ENCODE measurements at regions of chr9 and their contacts with region 1.

Region 1: DNA sequence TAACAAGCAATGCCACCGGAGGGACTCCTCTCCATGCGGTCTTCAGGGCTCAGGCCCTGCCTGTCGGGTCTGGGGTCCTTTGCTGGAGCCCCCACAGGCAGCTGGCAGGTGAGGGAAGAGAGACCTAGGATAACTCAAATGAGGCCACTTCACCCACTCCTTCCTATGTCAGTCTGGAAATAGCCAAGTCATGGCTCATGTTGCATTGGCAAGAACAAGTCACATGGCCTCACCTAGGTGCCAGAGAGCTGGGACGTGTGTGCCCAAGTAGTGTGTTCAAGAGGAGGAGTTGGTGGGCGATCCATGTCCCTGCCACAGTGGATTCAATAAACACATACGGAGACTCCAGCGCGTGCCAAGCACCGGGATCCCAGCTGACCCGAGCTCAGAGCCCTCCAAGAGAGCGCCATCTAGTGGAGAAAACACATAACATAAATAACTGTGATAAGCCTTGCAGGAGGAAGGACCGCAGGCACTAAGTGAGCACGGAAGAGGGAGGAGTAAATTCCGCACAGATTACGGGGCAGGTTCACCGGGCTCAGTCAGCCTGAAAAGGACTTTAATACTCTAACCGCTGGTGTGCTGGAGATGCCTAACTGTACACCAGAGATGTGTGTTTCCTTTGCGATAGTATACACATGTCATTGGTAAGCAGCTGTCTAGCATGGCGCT is 580.8 kb downstream of the CCDC171 start:
- DNase-seq: peak; percentile 39
- H3K4me3 ChIP-seq: no peak overlapping the region
- H3K27ac ChIP-seq: no peak overlapping the region
- H3K4me1 ChIP-seq: no peaks in the 10 kb centered on the region
- CTCF ChIP-seq: peak; percentile 84

Region 2: DNA sequence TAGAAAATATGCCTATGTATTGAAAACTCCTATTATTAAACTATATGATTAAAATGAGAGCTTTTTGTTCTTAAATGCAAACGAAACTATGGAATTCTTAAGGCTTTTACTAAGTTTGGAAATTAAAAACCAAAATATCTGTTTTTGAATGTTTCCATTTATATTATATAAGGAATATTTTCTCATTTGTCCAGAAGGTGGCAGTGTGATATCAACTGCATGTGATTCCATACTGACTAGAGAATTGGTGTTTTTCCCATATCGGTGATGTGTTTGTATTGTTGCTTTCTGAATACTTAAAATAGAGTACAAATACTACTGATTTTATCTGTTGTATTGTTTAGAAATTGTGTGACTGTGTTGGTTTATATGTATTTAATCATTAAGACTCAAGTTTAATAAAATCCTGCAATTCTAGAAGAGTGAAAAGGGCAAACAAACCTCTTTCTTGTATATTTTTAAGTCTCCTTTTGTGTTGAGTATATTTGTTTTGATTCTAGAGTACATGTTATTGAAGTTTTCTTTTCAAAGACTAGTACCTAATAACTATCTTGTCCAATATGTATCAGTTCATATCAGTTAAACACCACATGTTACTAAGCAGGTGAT is 260.0 kb before region 1 on chr9:
- CTCF ChIA-PET with region 1: no interaction called
- POLR2A ChIA-PET with region 1: no interaction called
- intact Hi-C with region 1: loop called (anchors 5 kb)
- DNase-seq: peak; percentile 49
- H3K4me3 ChIP-seq: no peak overlapping the region
- H3K27ac ChIP-seq: no peak overlapping the region
- H3K4me1 ChIP-seq: no peaks in the 10 kb centered on the region
- CTCF ChIP-seq: peak; percentile 96

Measured in OCI-LY7 (cell line).